Left lung (tissue), 14 donors: ENCODE measurements at regions of chr13 and their contacts with region 1.

Region 1: GRCh38 chr13:40682449-40683240 is 16.2 kb upstream of the FOXO1 start:
- DNase-seq: no peak
- ATAC-seq: peak; percentile 58
- H3K4me3 ChIP-seq: no peak overlapping the region
- H3K27ac ChIP-seq: no peak overlapping the region
- H3K4me1 ChIP-seq: peaks cover 0 to 6% of the 10 kb centered on the region in 2 donors
- H3K27me3 ChIP-seq: no peaks in the 10 kb centered on the region
- CTCF ChIP-seq: peak; percentile 57 to 58

Region 2: DNA sequence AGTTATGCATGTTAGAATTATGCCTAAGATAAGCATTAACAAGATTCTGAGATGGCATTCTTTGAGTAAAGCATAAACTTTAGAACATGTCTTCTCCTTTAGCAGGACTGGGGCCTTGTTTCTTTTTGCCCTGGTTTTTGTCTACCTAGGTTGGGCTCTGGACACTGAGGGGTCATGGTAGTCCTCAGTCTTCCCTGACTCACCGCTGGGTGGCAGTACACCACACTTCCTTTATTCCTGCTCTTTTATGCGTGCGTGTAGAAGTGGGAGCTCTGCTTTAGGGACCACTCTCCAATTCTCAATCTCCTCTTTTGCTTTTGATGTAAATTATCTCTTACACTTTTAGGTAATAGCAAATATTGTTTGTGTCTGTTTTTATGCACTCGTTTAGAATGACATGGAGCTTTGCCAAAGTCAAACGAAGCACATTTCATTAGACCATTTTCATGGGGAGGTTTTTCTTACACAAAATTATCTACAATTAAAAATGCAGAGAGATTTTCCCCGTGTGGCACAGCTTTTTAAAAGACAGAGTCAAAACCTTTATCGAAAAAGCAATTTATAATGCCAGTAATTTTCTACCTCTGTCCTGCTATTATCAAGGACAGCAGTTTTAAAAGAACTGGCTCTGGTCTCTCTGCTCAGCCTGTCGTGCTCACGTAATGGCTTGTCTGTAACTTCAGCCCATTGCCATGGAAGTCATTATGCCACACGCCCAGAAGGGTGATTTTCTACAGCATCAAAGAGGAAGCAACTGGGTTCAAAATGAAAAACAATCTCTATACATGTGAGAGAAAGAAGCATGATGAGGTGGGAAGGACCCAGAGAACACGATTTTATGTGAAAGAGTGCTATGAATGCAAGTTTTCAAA is 613.2 kb before region 1 on chr13:
- intact Hi-C with region 1: loop called in 1 of 2 experiments (anchors 10 kb)
- DNase-seq: peak in 3 of 4 donors; percentile 61 to 80 (median 71)
- ATAC-seq: peak; percentile 96
- H3K4me3 ChIP-seq: no peak overlapping the region
- H3K27ac ChIP-seq: no peak overlapping the region
- H3K4me1 ChIP-seq: peaks cover 0 to 7% of the 10 kb centered on the region in 2 donors
- H3K27me3 ChIP-seq: no peaks in the 10 kb centered on the region
- CTCF ChIP-seq: peak; percentile 86

Region 3: DNA sequence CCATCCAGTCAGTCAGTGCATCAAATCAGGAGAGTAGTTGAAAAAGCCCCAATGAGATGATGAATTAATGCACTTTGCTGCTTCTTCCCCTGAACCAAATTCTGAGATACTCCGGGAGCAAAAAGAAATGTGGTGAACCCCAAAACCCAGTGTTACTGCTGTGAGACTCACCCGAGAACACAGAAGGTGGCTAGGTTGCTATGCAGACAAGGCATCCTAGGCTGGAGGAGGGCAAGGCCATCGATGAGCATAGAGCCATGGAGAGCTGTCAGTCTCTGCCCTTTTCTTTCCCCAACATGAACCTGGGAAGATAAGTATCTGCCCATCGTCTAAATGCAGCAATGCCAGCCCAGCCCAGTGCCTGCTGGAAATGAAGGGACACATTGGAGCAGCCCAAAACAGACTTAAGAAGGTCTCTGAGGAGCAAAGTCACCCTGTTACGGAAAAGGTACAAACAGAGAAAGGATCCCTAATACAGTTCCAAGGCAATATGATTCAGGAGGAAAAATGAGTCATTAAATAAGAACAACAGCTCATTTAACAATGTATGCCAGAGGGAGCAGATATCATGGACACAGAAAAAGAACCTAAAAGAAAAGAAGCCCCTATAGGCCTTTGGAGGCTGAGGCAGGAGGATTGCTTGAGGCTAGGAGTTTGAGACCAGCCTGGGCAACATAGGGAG is 288.2 kb before region 1 on chr13:
- intact Hi-C with region 1: no loop called
- DNase-seq: no peak
- ATAC-seq: no peak
- H3K4me3 ChIP-seq: no peak overlapping the region
- H3K27ac ChIP-seq: no peak overlapping the region
- H3K4me1 ChIP-seq: peaks cover 0 to 6% of the 10 kb centered on the region in 2 donors
- H3K27me3 ChIP-seq: no peaks in the 10 kb centered on the region
- CTCF ChIP-seq: no peak

Region 4: GRCh38 chr13:40522282-40522681 is 160.4 kb before region 1 on chr13:
- intact Hi-C with region 1: no loop called
- DNase-seq: no peak
- ATAC-seq: no peak
- H3K4me3 ChIP-seq: no peak overlapping the region
- H3K27ac ChIP-seq: no peak overlapping the region
- H3K4me1 ChIP-seq: no peaks in the 10 kb centered on the region
- H3K27me3 ChIP-seq: no peaks in the 10 kb centered on the region
- CTCF ChIP-seq: no peak

Region 5: GRCh38 chr13:40819797-40820315 is 137.2 kb after region 1 on chr13:
- intact Hi-C with region 1: no loop called
- DNase-seq: no peak
- ATAC-seq: no peak
- H3K4me3 ChIP-seq: no peak overlapping the region
- H3K27ac ChIP-seq: no peak overlapping the region
- H3K4me1 ChIP-seq: no peaks in the 10 kb centered on the region
- H3K27me3 ChIP-seq: no peaks in the 10 kb centered on the region
- CTCF ChIP-seq: no peak